Heart left ventricle (tissue), 16 donors: ENCODE measurements at regions of chr1 and their contacts with region 1.

Region 1: DNA sequence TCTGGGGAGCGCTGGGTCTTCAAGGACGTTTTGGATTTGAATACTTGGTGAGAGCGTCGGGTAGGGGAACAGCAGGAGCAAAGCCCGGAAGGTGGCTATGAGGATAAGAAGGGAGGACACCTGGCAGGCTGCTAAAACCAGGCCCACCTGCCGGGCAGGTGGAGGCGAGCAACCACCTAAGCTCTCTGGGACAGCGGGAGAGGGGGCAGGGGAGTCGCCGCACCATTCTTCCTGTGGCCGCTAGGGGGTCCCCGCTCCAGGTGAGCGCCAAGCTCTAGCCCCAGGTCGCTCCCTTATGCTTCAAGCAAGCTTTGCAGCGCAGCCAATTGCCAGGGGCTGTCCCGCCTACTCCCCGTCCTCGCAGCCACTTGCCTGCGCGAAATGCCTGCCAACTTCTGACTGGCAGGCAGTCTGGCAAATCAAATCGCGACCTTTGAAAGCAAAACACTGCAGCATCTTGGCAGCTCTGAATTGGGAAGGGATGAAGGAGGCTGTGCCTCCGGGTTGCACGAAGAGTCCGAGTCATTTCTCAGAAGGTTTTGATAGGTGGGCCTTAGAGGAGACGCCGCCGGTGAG is at the start of gene NIPAL3:
- DNase-seq: peak; percentile 98 to 99 (median 99)
- ATAC-seq: peak; percentile 95 to 97 (median 96)
- H3K4me3 ChIP-seq: peak within 1 kb of the TSS; percentile 38 to 95 (median 72)
- H3K27ac ChIP-seq: peak within 1 kb of the TSS in 8 of 12 donors; percentile 16 to 60 (median 46)
- H3K4me1 ChIP-seq: peaks cover 0 to 51% (median 23%) of the 10 kb centered on the region in 12 donors
- H3K27me3 ChIP-seq: no peaks in the 10 kb centered on the region
- CTCF ChIP-seq: peak; percentile 62 to 85 (median 80)
- POLR2A ChIP-seq: peak in 1 of 2 donors; percentile 33
- total RNA-seq, gene NIPAL3: 24.7 to 48.3 (median 29.7) TPM

Region 2: GRCh38 chr1:24206516-24207394 is 208.7 kb before region 1 on chr1:
- intact Hi-C with region 1: no loop called
- DNase-seq: no peak
- ATAC-seq: no peak
- H3K4me3 ChIP-seq: no peak overlapping the region
- H3K27ac ChIP-seq: no peak overlapping the region
- H3K4me1 ChIP-seq: peaks cover 0 to 7% (median 0%) of the 10 kb centered on the region in 12 donors
- H3K27me3 ChIP-seq: no peaks in the 10 kb centered on the region
- CTCF ChIP-seq: no peak
- POLR2A ChIP-seq: no peak

Region 3: GRCh38 chr1:24502709-24503058 is 87.3 kb after region 1 on chr1 and contains the start of gene RCAN3:
- intact Hi-C with region 1: loop called in 7 of 10 experiments (anchors 5 to 10 kb)
- DNase-seq: peak; percentile 87 to 93 (median 90)
- ATAC-seq: peak; percentile 88 to 99 (median 96)
- H3K4me3 ChIP-seq: peak within 1 kb of the TSS; percentile 66 to 95 (median 84)
- H3K27ac ChIP-seq: peak within 1 kb of the TSS; percentile 76 to 93 (median 87)
- H3K4me1 ChIP-seq: peaks cover 0 to 35% (median 9%) of the 10 kb centered on the region in 12 donors
- H3K27me3 ChIP-seq: no peaks in the 10 kb centered on the region
- CTCF ChIP-seq: no peak
- POLR2A ChIP-seq: no peak
- total RNA-seq, gene RCAN3: 4.3 to 9.7 (median 6.1) TPM

Region 4: GRCh38 chr1:24526940-24527542 is 111.6 kb after region 1 on chr1:
- intact Hi-C with region 1: loop called in 1 of 10 experiments (anchors 5 kb)
- DNase-seq: no peak
- ATAC-seq: no peak
- H3K4me3 ChIP-seq: no peak overlapping the region
- H3K27ac ChIP-seq: no peak overlapping the region
- H3K4me1 ChIP-seq: no peaks in the 10 kb centered on the region
- H3K27me3 ChIP-seq: no peaks in the 10 kb centered on the region
- CTCF ChIP-seq: peak; percentile 25 to 59 (median 40)
- POLR2A ChIP-seq: no peak

Region 5: GRCh38 chr1:24586970-24587820 is 171.8 kb after region 1 on chr1:
- intact Hi-C with region 1: loop called in 1 of 10 experiments (anchors 10 kb)
- DNase-seq: no peak
- ATAC-seq: peak in 2 of 4 donors; percentile 39 to 52
- H3K4me3 ChIP-seq: no peak overlapping the region
- H3K27ac ChIP-seq: no peak overlapping the region
- H3K4me1 ChIP-seq: peaks cover 0 to 14% (median 0%) of the 10 kb centered on the region in 12 donors
- H3K27me3 ChIP-seq: peaks cover 0 to 5% (median 0%) of the 10 kb centered on the region in 9 donors
- CTCF ChIP-seq: peak; percentile 45 to 70 (median 58)
- POLR2A ChIP-seq: no peak

Region 6: DNA sequence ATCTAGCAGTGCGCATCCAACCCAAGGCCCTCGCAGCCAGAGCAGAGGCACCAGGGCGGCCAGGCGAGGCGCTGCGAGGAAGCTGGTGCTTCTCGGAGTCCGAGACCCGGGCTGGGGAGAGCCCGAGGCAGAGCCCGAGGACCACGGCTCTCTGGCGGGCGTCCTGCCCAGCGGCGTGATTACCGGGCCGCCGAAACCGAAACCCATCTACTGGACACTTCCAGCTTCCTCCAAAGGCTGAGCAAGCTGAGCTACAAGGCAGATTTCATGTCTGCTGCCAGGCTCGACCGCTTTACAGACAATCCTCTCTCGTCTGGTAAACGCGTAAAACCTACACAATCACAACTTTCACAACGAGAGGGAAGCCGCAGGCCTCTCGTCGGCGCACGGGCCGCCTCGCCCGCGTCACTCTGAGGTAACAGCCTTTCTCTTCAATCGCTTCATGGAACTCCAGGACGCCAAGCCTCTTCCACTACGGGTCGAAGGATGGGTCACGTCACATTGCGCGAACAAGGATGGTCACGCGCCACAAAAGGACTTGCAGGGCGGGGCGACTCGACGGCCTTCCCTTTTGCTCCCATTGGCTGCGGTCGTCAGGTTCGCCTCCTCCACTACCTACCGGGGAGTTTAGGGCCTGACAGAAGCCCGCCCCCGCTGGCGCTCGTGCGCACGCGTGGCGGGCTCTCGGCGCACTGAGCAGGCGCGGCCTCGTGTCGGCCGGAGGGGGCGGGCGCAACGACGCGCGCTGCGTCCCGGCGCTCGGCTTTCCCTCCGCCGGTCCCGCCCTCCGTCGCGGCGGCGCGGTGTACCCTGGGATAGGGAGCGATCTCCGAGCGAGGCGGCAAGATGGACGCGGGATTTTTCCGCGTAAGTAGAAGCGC is 227.3 kb after region 1 on chr1 and contains the start of gene SRRM1:
- intact Hi-C with region 1: loop called in 6 of 10 experiments (anchors 5 to 10 kb)
- DNase-seq: peak; percentile 99 to 100 (median 100)
- ATAC-seq: peak; percentile 96 to 98 (median 97)
- H3K4me3 ChIP-seq: peak within 1 kb of the TSS; percentile 79 to 98 (median 93)
- H3K27ac ChIP-seq: peak within 1 kb of the TSS; percentile 95 to 100 (median 99)
- H3K4me1 ChIP-seq: peaks cover 0 to 37% (median 25%) of the 10 kb centered on the region in 12 donors
- H3K27me3 ChIP-seq: no peaks in the 10 kb centered on the region
- CTCF ChIP-seq: peak in 2 of 12 donors; percentile 10 to 34
- POLR2A ChIP-seq: peak; percentile 97 to 99
- total RNA-seq, gene SRRM1: 39.3 to 97.0 (median 62.2) TPM

Region 7: DNA sequence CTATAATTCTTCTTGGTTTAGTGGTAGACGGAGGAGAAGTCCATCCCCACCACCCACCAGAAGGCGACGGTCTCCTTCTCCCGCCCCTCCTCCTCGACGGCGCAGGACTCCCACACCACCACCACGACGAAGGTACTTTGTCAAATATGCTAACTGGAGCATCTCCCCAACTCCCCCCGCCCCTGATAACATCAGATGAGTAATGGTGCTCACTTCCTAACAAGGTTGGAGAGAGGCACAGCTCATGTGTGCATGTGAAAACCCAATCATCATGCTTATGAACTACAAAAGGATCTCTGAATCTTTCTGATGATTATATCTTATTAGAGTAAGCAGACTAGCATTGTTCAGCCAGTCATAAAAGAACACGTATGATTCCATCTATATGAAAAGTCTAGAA is 251.4 kb after region 1 on chr1:
- intact Hi-C with region 1: no loop called
- DNase-seq: no peak
- ATAC-seq: no peak
- H3K4me3 ChIP-seq: no peak overlapping the region
- H3K27ac ChIP-seq: no peak overlapping the region
- H3K4me1 ChIP-seq: peaks cover 0 to 7% (median 0%) of the 10 kb centered on the region in 12 donors
- H3K27me3 ChIP-seq: no peaks in the 10 kb centered on the region
- CTCF ChIP-seq: no peak
- POLR2A ChIP-seq: no peak

Region 8: DNA sequence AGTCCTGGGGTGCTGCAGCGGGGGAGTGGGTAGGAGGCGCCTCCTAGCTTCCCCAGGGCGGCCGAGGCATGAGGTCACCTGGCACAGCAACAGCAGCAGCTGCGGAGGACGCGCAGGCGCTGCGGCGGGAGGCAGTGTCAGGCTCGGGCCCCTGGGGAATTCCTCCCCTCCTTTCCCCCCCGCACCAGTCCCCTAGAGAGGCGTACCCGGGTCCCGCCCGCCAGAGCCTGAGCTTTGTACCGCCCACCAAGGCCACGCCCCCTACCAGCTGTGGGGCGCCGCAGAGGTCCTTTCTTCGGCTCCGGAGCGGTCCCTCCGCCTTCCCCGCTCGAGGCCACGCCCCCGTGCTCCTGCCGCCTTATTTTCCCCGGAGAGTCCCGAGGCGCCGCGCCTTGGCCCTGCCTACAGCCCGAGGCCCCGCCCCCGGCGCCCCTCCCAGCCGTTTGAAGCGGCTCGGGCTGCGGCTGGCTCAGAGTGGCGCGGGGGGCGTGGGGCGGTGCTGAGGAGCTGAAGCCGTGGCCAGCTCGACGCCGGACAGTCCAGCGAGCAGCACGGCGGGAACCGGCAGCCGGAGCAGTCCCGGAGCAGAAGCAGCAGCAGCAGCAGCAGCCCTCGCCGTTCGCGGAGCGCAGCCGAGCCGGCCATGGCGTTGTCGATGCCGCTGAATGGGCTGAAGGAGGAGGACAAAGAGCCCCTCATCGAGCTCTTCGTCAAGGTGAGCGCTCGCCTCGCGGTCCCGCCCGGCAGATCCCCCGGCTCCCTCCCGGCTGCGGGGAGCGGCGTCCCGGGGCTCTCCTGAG is 329.7 kb after region 1 on chr1 and contains the start of gene CLIC4:
- intact Hi-C with region 1: no loop called
- DNase-seq: peak; percentile 100
- ATAC-seq: peak; percentile 96 to 97 (median 96)
- H3K4me3 ChIP-seq: peak within 1 kb of the TSS; percentile 76 to 98 (median 89)
- H3K27ac ChIP-seq: peak within 1 kb of the TSS; percentile 89 to 99 (median 96)
- H3K4me1 ChIP-seq: peaks cover 0 to 57% (median 38%) of the 10 kb centered on the region in 12 donors
- H3K27me3 ChIP-seq: no peaks in the 10 kb centered on the region
- CTCF ChIP-seq: peak in 9 of 12 donors; percentile 11 to 67 (median 41)
- POLR2A ChIP-seq: peak; percentile 92 to 100
- total RNA-seq, gene CLIC4: 280 to 917 (median 387) TPM

Region 9: GRCh38 chr1:24822887-24823286 is 407.5 kb after region 1 on chr1:
- intact Hi-C with region 1: no loop called
- DNase-seq: no peak
- ATAC-seq: no peak
- H3K4me3 ChIP-seq: no peak overlapping the region
- H3K27ac ChIP-seq: peak overlapping the region in 3 of 12 donors; percentile 2 to 54 (median 18)
- H3K4me1 ChIP-seq: peaks cover 0 to 57% (median 31%) of the 10 kb centered on the region in 12 donors
- H3K27me3 ChIP-seq: no peaks in the 10 kb centered on the region
- CTCF ChIP-seq: no peak
- POLR2A ChIP-seq: no peak